Activated CD4-positive, alpha-beta T cell treated with anti-CD3 and anti-CD28 coated beads for 36 hours (primary cell): ENCODE measurements at regions of chr13 and their contacts with region 1.

Region 1: GRCh38 chr13:27826379-27827353 is 34.4 kb downstream of the GSX1 start:
- DNase-seq: peak; percentile 82
- ATAC-seq: peak; percentile 84
- H3K4me3 Mint-ChIP-seq: no peak overlapping the region
- H3K27ac Mint-ChIP-seq: no peak overlapping the region
- H3K4me1 Mint-ChIP-seq: peaks cover 7% of the 10 kb centered on the region
- H3K27me3 Mint-ChIP-seq: peaks cover 51% of the 10 kb centered on the region

Region 2: DNA sequence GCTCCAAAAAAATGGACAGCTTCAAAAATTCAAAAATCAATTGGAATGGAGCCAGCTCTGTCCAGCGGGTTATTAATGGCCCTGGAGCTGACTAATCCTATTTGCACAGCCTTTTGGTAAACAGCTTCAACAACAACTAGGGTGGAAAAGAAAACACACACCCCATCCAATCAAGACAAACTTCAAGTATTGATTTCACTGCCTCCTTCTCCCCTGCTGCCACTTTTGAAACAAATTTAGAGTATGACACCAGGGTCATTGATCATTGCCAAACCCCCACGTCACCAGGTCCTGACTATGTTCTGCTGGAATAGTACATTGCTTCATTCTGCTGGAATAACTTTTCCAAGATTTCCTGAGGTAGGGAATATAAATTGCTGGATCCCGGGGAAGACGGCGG is 459.1 kb before region 1 on chr13:
- CTCF ChIA-PET with region 1: interaction called, 74 read pairs
- POLR2A ChIA-PET with region 1: no interaction called
- intact Hi-C with region 1: loop called (anchors 1 kb)
- DNase-seq: no peak
- ATAC-seq: no peak
- H3K4me3 Mint-ChIP-seq: no peak overlapping the region
- H3K27ac Mint-ChIP-seq: no peak overlapping the region
- H3K4me1 Mint-ChIP-seq: no peaks in the 10 kb centered on the region
- H3K27me3 Mint-ChIP-seq: peaks cover 6% of the 10 kb centered on the region

Region 3: GRCh38 chr13:27406178-27406939 is 420.3 kb before region 1 on chr13:
- CTCF ChIA-PET with region 1: interaction called, 7 read pairs
- POLR2A ChIA-PET with region 1: no interaction called
- intact Hi-C with region 1: loop called (anchors 1 kb)
- DNase-seq: peak; percentile 40
- ATAC-seq: peak; percentile 69
- H3K4me3 Mint-ChIP-seq: no peak overlapping the region
- H3K27ac Mint-ChIP-seq: no peak overlapping the region
- H3K4me1 Mint-ChIP-seq: peaks cover 6% of the 10 kb centered on the region
- H3K27me3 Mint-ChIP-seq: peaks cover 3% of the 10 kb centered on the region

Region 4: DNA sequence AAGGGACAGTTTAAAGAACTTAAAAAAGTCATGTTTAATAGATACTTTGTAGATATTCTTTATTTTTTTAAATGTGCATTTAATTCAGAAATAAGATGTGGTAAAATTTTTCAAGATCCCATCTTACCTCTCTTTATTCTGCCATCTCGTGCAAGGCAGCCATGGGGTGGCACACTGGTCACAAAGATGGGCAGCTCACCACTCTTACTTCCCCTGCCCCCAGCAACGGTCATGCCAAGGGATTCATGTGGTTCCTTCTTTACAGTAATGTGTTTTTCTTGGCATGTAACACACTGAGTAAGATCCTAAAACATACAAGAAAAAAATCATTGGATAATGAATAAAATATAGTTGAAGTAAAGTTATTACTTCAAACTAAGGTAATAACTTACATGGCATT is 270.6 kb before region 1 on chr13:
- CTCF ChIA-PET with region 1: interaction called, 5 read pairs
- POLR2A ChIA-PET with region 1: no interaction called
- intact Hi-C with region 1: loop called in 1 of 2 experiments (anchors 5 kb)
- DNase-seq: peak; percentile 10
- ATAC-seq: no peak
- H3K4me3 Mint-ChIP-seq: no peak overlapping the region
- H3K27ac Mint-ChIP-seq: no peak overlapping the region
- H3K4me1 Mint-ChIP-seq: peaks cover under 1% of the 10 kb centered on the region
- H3K27me3 Mint-ChIP-seq: no peaks in the 10 kb centered on the region

Region 5: DNA sequence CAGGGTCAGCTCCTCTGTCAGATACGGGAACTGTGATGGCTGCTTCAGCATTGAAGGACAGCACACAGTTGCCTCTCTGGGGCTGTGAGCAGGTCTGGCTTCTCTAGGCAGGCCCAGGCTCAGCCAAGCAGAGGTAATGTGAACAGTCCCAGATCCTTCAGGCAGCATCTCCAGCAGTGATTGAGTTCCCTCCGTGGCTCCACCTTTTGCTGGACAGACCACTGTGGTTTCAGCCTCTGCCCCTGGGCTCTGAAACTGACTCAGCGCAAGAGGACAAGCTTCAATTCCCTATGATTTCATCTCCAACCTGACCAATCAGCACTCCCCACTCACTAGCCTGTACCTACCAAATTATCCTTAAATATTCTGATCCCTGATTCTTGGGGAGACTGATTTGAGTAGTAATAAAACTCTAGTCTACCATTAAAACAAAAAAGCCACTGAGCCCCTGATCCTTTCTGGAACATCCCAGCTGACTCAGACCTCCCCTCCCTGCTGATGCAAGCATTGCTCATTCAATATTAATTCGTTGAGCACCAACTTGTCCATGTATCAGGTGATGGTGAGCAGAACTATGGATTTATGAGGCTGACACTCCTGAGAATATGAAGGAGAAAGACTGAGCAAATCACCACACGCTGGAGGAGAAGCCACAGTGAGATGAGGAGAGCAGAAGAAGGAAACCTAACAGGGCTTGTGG is 17.7 kb before region 1 on chr13:
- CTCF ChIA-PET with region 1: interaction called, 15 read pairs
- POLR2A ChIA-PET with region 1: no interaction called
- intact Hi-C with region 1: no loop called
- DNase-seq: no peak
- ATAC-seq: no peak
- H3K4me3 Mint-ChIP-seq: no peak overlapping the region
- H3K27ac Mint-ChIP-seq: no peak overlapping the region
- H3K4me1 Mint-ChIP-seq: no peaks in the 10 kb centered on the region
- H3K27me3 Mint-ChIP-seq: peaks cover 33% of the 10 kb centered on the region

Region 6: DNA sequence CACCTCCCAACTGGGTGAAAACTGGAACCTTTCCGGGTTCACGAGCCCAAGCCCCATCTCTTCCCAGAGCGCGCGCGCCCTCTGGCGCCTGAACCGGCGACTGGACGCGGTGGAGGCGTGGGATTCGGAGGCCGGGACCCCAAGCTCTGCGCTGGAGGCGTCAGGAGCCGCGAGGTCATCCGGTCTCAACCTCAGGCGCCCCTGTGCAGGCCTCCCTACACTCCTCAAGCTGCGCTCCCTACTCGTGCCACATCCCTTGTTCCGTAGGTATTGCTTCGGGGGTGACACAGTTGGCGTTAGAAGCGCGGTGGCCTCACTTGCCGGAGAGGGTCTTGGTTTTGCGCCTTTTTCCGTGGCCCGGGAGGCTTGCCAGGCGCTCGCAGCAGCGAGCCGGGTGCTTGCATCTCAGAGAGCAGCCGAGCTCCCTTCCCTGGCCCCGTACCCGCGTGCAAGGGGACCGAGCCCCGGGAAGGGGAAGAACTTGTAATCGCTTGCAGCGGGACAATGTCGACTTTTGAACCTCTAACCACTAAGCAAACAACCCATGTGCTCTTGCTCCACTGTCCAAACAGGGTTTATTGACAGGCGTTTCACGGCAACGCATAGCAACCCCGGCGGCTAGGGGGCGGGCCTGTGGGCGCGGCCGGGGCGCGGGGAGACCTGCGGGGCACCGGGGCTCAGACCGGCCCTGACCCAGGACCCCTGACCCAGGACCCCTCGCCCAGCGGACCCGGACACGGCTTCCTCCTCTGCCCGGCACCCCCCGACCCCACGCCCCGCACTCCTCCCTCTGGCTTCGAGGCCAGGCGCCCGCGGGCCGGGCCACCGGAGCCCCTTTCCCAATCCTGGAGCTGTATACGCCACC is 133.9 kb after region 1 on chr13:
- CTCF ChIA-PET with region 1: interaction called, 61 read pairs
- POLR2A ChIA-PET with region 1: no interaction called
- intact Hi-C with region 1: no loop called
- DNase-seq: peak; percentile 72
- ATAC-seq: peak; percentile 39
- H3K4me3 Mint-ChIP-seq: peak overlapping the region; percentile 30
- H3K27ac Mint-ChIP-seq: no peak overlapping the region
- H3K4me1 Mint-ChIP-seq: peaks cover 8% of the 10 kb centered on the region
- H3K27me3 Mint-ChIP-seq: peaks cover 62% of the 10 kb centered on the region